ENCODE measurements at regions of chr3 and their contacts with region 1.

Region 1: GRCh38 chr3:121817753-121818152 is 17.1 kb downstream of the IQCB1 start:
- DNase-seq: no peak
- H3K4me3 ChIP-seq: no peak overlapping the region
- H3K27ac ChIP-seq: no peak overlapping the region
- H3K4me1 ChIP-seq: no peaks in the 10 kb centered on the region
- H3K27me3 ChIP-seq: no peaks in the 10 kb centered on the region
- CTCF ChIP-seq: no peak
- POLR2A ChIP-seq: no peak

Region 2: GRCh38 chr3:121834696-121835464 is 17.1 kb after region 1 on chr3 and contains the starts of genes EAF2 and IQCB1:
- intact Hi-C with region 1: loop called (anchors 2 kb)
- DNase-seq: peak; percentile 93 to 96
- H3K4me3 ChIP-seq: peak within 1 kb of the TSS; percentile 78 to 86
- H3K27ac ChIP-seq: peak within 1 kb of the TSS; percentile 86 to 88
- H3K4me1 ChIP-seq: peaks cover 0 to 6% of the 10 kb centered on the region in 2 donors
- H3K27me3 ChIP-seq: no peaks in the 10 kb centered on the region
- CTCF ChIP-seq: peak in 2 of 4 experiments; percentile 7 to 10
- POLR2A ChIP-seq: peak; percentile 75 to 98
- total RNA-seq, gene EAF2: 0.88 to 21.8 (median 6.9) TPM
- total RNA-seq, gene IQCB1: 17.9 to 69.4 (median 37.7) TPM

Region 3: GRCh38 chr3:121970047-121970446 is 152.3 kb after region 1 on chr3:
- intact Hi-C with region 1: no loop called
- DNase-seq: no peak
- H3K4me3 ChIP-seq: no peak overlapping the region
- H3K27ac ChIP-seq: no peak overlapping the region
- H3K4me1 ChIP-seq: no peaks in the 10 kb centered on the region
- H3K27me3 ChIP-seq: no peaks in the 10 kb centered on the region
- CTCF ChIP-seq: no peak
- POLR2A ChIP-seq: no peak

Measured in uterus (tissue), 4 donors.